Colonic mucosa (tissue), 4 donors: ENCODE measurements at regions of chr2 and their contacts with region 1.

Region 1: DNA sequence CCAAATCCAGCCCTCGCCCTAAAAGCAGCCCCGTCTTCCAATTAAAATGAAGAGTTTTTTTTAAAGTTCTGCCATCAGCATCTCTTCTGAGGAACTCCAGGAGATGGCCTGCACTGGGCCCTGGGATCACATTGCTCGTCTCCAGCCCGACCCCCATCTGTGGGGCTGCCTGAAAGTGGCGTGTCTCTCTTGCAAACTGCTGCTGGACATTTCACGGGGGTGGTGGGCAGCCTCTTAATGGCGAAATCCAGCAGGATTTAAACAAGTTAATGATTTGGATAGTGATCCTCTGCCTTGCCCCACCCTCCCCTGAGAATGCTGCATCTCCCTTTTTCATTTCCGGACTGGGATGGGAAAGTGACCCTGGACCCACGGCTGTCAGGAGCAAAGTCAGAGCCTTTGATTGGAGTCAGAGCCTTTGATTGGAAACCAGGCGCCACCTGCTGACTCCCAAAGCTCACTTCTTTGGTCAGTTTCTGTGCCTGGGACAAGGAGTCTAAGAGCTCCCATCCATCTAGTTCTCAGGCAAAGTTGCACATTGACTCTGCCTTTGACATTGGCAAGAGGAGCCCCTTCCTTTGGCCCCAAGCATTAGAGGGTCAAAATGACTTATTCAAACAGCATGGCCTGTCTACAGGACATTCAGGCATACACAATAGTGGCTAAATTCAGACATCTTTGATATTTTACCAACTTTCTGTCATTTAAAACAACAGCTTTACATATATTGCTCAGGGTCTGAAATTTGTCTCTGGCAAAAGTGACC is 155.2 kb downstream of the SH3BP4 start:
- DNase-seq: peak; percentile 70
- H3K4me3 ChIP-seq: no peak overlapping the region
- H3K27ac ChIP-seq: no peak overlapping the region
- H3K4me1 ChIP-seq: no peaks in the 10 kb centered on the region
- H3K27me3 ChIP-seq: no peaks in the 10 kb centered on the region
- CTCF ChIP-seq: peak; percentile 52

Region 2: GRCh38 chr2:234550511-234551107 is 556.4 kb before region 1 on chr2:
- intact Hi-C with region 1: loop called (anchors 2 kb)
- DNase-seq: peak; percentile 61
- H3K4me3 ChIP-seq: no peak overlapping the region
- H3K27ac ChIP-seq: no peak overlapping the region
- H3K4me1 ChIP-seq: no peaks in the 10 kb centered on the region
- H3K27me3 ChIP-seq: no peaks in the 10 kb centered on the region
- CTCF ChIP-seq: peak; percentile 91